Activated CD4-positive, alpha-beta T cell treated with anti-CD3 and anti-CD28 coated beads for 36 hours (primary cell): ENCODE measurements at regions of chr14 and their contacts with region 1.

Region 1: GRCh38 chr14:76050797-76051392 is 65.3 kb downstream of the IFT43 start:
- DNase-seq: peak; percentile 70
- ATAC-seq: peak; percentile 51
- H3K4me3 Mint-ChIP-seq: no peak overlapping the region
- H3K27ac Mint-ChIP-seq: no peak overlapping the region
- H3K4me1 Mint-ChIP-seq: no peaks in the 10 kb centered on the region
- H3K27me3 Mint-ChIP-seq: no peaks in the 10 kb centered on the region

Region 2: GRCh38 chr14:76352639-76353281 is 301.9 kb after region 1 on chr14:
- CTCF ChIA-PET with region 1: interaction called, 73 read pairs
- POLR2A ChIA-PET with region 1: no interaction called
- intact Hi-C with region 1: loop called (anchors 1 kb)
- DNase-seq: peak; percentile 78
- ATAC-seq: peak; percentile 92
- H3K4me3 Mint-ChIP-seq: no peak overlapping the region
- H3K27ac Mint-ChIP-seq: no peak overlapping the region
- H3K4me1 Mint-ChIP-seq: no peaks in the 10 kb centered on the region
- H3K27me3 Mint-ChIP-seq: peaks cover 14% of the 10 kb centered on the region

Region 3: GRCh38 chr14:76386915-76387782 is 336.3 kb after region 1 on chr14:
- CTCF ChIA-PET with region 1: interaction called, 23 read pairs
- POLR2A ChIA-PET with region 1: no interaction called
- intact Hi-C with region 1: loop called (anchors 1 kb)
- DNase-seq: peak; percentile 83
- ATAC-seq: peak; percentile 90
- H3K4me3 Mint-ChIP-seq: no peak overlapping the region
- H3K27ac Mint-ChIP-seq: no peak overlapping the region
- H3K4me1 Mint-ChIP-seq: no peaks in the 10 kb centered on the region
- H3K27me3 Mint-ChIP-seq: peaks cover 37% of the 10 kb centered on the region

Region 4: DNA sequence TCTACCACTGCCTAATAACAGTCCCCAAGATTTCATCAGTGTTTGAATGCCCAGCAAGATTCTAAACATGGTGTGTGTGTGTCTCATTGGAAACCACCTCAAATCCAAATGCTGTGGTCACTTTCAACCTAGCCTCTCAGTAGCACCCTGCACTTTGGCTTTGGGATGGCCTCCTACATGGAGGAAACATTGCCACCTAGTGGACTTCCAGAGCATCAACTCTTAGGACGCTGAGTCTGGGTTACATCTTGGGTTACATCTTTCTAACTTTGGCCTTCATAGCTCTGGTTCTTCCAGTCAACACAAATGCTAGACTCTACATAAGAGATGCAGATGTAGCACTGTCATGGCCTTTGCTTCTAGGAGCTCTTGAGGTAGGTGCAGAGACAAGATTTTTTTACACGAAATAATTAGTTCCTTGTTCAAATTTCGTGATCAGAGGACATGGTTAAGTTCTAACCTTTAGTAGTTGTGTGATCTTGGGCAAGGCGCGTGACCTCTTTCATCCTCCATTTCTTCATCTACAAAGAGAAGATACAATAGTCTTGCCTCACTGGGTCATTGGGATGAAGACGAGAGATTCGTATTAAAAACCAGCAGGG is 596.9 kb after region 1 on chr14:
- CTCF ChIA-PET with region 1: no interaction called
- POLR2A ChIA-PET with region 1: no interaction called
- intact Hi-C with region 1: loop called (anchors 1 to 2 kb)
- DNase-seq: peak; percentile 37
- ATAC-seq: peak; percentile 53
- H3K4me3 Mint-ChIP-seq: no peak overlapping the region
- H3K27ac Mint-ChIP-seq: no peak overlapping the region
- H3K4me1 Mint-ChIP-seq: no peaks in the 10 kb centered on the region
- H3K27me3 Mint-ChIP-seq: peaks cover 4% of the 10 kb centered on the region